Activated CD4-positive, alpha-beta T cell treated with anti-CD3 and anti-CD28 coated beads, Interleukin-2, amount 10 ng/mL, durations not matched to agents 7 days and 5 days (primary cell): ENCODE measurements at regions of chr3 and their contacts with region 1.

Region 1: GRCh38 chr3:56801662-56802377 is at the start of gene ARHGEF3:
- DNase-seq: peak; percentile 85
- H3K4me3 Mint-ChIP-seq: peak within 1 kb of the TSS; percentile 87
- H3K27ac Mint-ChIP-seq: peak within 1 kb of the TSS; percentile 87
- H3K4me1 Mint-ChIP-seq: peaks cover 40% of the 10 kb centered on the region
- H3K27me3 Mint-ChIP-seq: no peaks in the 10 kb centered on the region
- total RNA-seq, gene ARHGEF3: 102 to 109 TPM

Region 2: DNA sequence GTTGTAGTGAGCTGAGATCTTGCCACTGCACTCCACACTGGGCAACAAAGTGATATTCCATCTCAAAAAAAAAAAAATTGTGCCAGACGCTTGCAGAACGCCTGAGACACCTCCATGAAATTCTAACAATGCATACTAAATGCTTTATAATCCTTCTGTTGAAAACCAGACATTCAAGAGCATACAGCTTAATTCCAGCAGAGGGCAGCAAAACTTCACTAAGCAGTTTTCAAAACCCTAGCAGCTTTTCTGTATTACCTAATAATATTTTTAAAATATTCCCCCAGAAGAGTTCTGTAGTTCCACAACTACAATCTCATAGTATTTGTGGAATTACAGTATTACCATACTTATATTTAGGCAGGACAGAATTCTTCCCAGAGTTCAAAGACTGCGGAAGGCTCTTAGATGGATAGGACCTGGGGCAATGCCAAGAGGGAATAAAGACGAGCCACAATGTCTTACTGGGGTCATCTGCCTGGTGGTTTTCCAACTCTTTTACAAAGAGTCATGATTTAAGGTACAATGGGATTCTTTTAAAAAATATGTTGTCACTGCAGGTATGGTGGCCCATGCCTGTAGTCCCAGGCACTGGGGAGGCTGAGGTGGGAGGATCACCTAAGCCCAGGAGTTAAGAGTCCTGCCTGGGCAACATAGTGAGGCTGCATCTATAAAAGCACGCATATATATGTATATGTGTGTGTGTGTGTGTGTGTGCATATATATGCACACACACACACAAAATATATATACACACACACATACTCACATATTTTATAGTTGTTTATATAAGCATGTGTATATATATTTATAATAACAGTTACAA is 99.1 kb before region 1 on chr3:
- CTCF ChIA-PET with region 1: interaction called, 59 read pairs
- POLR2A ChIA-PET with region 1: interaction called, 7 read pairs
- DNase-seq: peak; percentile 73
- H3K4me3 Mint-ChIP-seq: no peak overlapping the region
- H3K27ac Mint-ChIP-seq: no peak overlapping the region
- H3K4me1 Mint-ChIP-seq: peaks cover 24% of the 10 kb centered on the region
- H3K27me3 Mint-ChIP-seq: no peaks in the 10 kb centered on the region

Region 3: GRCh38 chr3:56783644-56784447 is 18.0 kb before region 1 on chr3:
- CTCF ChIA-PET with region 1: interaction called, 79 read pairs
- POLR2A ChIA-PET with region 1: interaction called, 7 read pairs
- DNase-seq: peak; percentile 88
- H3K4me3 Mint-ChIP-seq: peak overlapping the region; percentile 67
- H3K27ac Mint-ChIP-seq: peak overlapping the region; percentile 90
- H3K4me1 Mint-ChIP-seq: peaks cover 98% of the 10 kb centered on the region
- H3K27me3 Mint-ChIP-seq: no peaks in the 10 kb centered on the region

Region 4: GRCh38 chr3:56819016-56819809 is 17.4 kb after region 1 on chr3:
- CTCF ChIA-PET with region 1: interaction called, 39 read pairs
- POLR2A ChIA-PET with region 1: no interaction called
- DNase-seq: no peak
- H3K4me3 Mint-ChIP-seq: no peak overlapping the region
- H3K27ac Mint-ChIP-seq: no peak overlapping the region
- H3K4me1 Mint-ChIP-seq: peaks cover 35% of the 10 kb centered on the region
- H3K27me3 Mint-ChIP-seq: no peaks in the 10 kb centered on the region

Region 5: DNA sequence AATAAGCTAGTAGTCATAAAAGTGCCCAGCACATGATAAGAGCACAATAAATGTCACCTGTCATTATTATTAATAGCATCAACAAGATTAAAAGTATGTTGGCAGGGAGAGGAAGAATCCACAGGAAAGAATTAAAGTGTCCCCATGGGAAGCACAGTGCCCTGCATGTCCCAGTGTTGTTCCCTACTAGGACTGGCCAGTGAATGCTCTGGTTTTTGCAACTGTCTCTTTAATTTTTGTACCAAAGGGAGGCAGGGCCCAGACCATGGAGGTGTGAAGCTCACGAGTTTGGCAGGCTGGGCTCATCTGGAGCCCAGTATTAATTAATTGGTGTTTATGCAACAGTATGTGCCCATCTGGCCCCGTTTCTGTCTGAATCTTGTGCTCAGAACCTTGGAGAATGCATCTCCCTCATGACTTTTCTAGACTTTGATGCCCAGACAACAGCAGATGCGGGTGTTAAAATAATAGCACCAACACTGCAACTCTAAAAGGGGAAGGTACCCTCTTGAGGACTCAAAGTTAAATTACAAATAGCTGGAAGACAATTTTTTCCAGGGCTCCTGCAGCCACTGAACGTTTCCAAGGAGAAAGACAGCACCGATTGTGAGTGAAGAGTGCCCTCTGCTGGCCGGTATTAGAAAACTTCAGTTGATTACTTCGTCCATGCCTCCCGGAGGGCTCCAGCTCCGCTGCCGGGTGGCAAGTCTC is 186.8 kb after region 1 on chr3:
- CTCF ChIA-PET with region 1: interaction called, 35 read pairs
- POLR2A ChIA-PET with region 1: no interaction called
- DNase-seq: peak; percentile 74
- H3K4me3 Mint-ChIP-seq: no peak overlapping the region
- H3K27ac Mint-ChIP-seq: no peak overlapping the region
- H3K4me1 Mint-ChIP-seq: peaks cover 25% of the 10 kb centered on the region
- H3K27me3 Mint-ChIP-seq: peaks cover 14% of the 10 kb centered on the region